ENCODE measurements at regions of chr4 and their contacts with region 1.

Region 1: GRCh38 chr4:68569466-68570121 is 6.5 kb downstream of the UGT2B17 start:
- DNase-seq: no peak
- H3K4me3 ChIP-seq: no peak overlapping the region
- H3K27ac ChIP-seq: no peak overlapping the region
- H3K4me1 ChIP-seq: no peaks in the 10 kb centered on the region
- H3K27me3 ChIP-seq: no peaks in the 10 kb centered on the region
- CTCF ChIP-seq: no peak
- EP300 ChIP-seq: no peak
- POLR2A ChIP-seq: no peak

Region 2: DNA sequence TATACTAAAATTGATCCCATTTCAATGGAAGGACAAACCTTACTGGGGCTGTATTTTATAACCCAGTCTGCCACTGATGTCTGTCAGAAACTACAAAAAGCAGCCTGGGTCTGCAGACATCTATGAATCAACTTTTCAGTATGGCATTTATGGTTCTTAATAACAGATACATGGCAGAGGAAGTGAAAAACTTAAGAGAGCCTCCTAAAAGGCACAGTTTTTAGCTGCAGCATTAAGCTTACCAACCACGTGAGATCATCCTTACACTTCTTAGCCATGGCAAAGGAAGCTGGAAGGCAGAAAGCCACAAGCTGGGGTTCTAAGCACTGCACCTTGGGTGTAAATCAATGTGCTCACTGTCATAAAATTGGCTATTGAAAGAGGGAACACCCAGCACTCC is 23.1 kb after region 1 on chr4:
- intact Hi-C with region 1: no loop called
- DNase-seq: no peak
- H3K4me3 ChIP-seq: no peak overlapping the region
- H3K27ac ChIP-seq: no peak overlapping the region
- H3K4me1 ChIP-seq: no peaks in the 10 kb centered on the region
- H3K27me3 ChIP-seq: no peaks in the 10 kb centered on the region
- CTCF ChIP-seq: no peak
- EP300 ChIP-seq: no peak
- POLR2A ChIP-seq: no peak

Region 3: DNA sequence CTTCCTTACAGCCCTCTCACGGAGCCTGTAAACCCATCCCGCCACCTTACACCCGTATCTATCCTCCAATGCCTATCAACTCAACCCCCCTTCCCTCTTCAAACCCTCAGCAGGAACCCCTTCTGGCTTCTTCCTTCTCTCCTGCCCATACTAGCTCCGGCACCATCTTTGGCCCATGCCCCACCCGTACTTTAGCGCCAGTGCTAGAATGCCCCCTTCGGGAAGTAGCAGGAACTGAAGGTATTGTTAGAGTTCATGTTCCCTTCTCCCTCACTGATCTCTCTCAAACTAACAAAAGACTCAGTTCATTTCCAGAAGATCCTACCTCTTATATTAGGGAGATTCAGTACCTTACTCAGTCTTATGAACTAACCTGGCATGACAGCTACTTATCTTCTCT is 103.5 kb after region 1 on chr4:
- intact Hi-C with region 1: loop called in 1 of 4 experiments (anchors 5 kb)
- DNase-seq: no peak
- H3K4me3 ChIP-seq: no peak overlapping the region
- H3K27ac ChIP-seq: no peak overlapping the region
- H3K4me1 ChIP-seq: no peaks in the 10 kb centered on the region
- H3K27me3 ChIP-seq: no peaks in the 10 kb centered on the region
- CTCF ChIP-seq: no peak
- EP300 ChIP-seq: no peak
- POLR2A ChIP-seq: no peak

Region 4: DNA sequence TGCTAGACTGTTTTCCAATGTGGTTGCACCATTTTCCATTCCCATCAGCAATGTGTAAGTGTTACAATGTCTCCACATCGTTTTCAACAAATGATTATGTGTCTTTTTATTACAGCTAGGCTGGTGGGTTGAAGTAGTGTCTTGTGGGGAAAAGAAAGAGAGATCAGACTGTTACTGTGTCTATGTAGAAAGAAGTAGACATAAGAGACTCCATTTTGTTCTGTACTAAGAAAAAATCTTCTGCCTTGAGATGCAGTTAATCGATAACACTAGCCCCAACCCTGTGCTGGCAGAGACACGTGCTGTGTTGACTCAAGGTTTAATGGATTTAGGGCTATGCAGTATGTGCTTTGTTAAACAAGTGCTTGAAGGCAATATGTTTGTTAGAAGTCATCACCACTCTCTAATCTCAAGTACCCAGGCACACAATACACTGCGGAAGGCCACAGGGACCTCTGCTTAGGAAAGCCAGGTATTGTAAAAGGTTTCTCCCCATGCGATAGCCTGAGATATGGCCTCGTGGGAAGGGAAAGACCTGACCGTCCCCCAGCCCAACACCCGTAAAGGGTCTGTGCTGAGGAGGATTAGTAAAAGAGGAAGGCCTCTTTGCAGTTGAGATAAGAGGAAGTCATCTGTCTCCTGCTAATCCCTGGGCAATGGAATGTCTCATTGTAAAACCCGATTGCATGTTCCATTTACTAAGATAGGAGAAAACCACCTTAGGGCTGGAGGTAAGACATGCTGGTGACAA is 123.9 kb after region 1 on chr4:
- intact Hi-C with region 1: no loop called
- DNase-seq: no peak
- H3K4me3 ChIP-seq: no peak overlapping the region
- H3K27ac ChIP-seq: no peak overlapping the region
- H3K4me1 ChIP-seq: no peaks in the 10 kb centered on the region
- H3K27me3 ChIP-seq: no peaks in the 10 kb centered on the region
- CTCF ChIP-seq: no peak
- EP300 ChIP-seq: no peak
- POLR2A ChIP-seq: no peak

Measured in ovary (tissue), 10 donors.